ENCODE measurements at regions of chr18 and their contacts with region 1.

Region 1: DNA sequence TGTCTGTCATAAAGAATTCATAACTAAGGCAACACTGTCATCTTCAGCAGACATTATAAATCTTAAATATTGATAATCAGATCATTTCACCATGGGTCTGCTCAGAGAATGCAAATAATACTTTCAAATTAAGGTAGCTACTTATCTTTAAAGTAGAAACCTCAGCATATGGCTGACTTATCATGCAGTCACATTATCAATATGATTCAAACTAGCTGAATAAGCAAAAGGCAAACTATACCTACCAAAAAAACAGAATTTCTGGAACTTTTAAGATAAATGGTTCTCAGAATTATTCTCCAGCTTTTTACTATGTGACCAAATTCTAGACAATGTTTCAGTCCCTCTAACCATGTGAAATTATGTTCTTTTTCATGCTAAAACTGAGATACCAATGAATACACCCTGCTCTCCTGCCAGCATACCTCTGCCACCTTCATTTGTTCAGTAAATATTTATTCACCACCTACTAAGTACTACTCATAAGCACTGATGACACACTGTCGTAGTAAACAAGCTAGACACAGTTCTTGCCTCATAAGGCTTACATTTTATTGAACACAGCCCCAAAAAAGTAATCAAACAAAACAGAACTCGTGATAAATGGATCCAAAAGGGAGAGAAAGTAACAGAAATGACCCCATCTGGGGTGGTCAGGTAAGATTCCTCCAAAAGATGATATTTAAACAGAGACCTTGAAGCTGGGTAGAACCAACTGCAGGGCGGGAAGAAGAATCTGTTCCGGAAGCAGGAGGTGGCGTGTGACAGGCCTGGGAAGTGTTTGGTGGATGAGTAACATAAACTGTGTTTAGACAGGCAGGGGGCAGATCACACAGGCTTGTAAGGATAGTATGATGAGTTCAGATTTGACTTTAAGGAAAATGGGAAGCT is 17.7 kb downstream of the SPIRE1 start:
- DNase-seq: peak; percentile 82
- H3K4me3 ChIP-seq: no peak overlapping the region
- H3K27ac ChIP-seq: peak overlapping the region; percentile 75
- H3K4me1 ChIP-seq: peaks cover 22% of the 10 kb centered on the region
- H3K27me3 ChIP-seq: no peaks in the 10 kb centered on the region
- CTCF ChIP-seq: no peak
- POLR2A ChIP-seq: no peak

Region 2: DNA sequence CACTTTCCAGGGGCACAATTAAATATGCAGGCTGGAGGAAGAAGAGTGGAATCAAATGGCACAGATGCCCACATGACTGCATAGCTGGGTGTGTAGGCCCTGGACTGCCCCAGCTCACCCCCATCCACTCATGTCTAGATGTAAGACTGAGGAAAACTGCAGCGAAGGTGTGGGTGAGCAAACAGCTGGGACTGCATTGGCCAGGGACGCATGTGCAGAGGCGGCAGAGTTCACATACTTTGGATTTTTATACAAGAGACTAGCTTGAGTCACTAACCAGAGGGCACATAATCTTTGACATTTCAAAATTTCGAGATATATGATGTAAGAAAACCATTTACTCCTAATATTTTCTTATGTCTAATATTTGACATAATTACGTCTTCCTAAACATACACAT is 42.5 kb before region 1 on chr18:
- CTCF ChIA-PET with region 1: interaction called, 4 read pairs
- POLR2A ChIA-PET with region 1: no interaction called
- dilution Hi-C with region 1: no loop called
- intact Hi-C with region 1: loop called (anchors 5 kb)
- DNase-seq: peak; percentile 79
- H3K4me3 ChIP-seq: no peak overlapping the region
- H3K27ac ChIP-seq: peak overlapping the region; percentile 87
- H3K4me1 ChIP-seq: peaks cover 58% of the 10 kb centered on the region
- H3K27me3 ChIP-seq: no peaks in the 10 kb centered on the region
- CTCF ChIP-seq: no peak
- POLR2A ChIP-seq: peak; percentile 24

Region 3: GRCh38 chr18:12628706-12629702 is 11.2 kb before region 1 on chr18:
- CTCF ChIA-PET with region 1: interaction called, 20 read pairs
- POLR2A ChIA-PET with region 1: no interaction called
- dilution Hi-C with region 1: no loop called
- intact Hi-C with region 1: no loop called
- DNase-seq: peak; percentile 55
- H3K4me3 ChIP-seq: no peak overlapping the region
- H3K27ac ChIP-seq: peak overlapping the region; percentile 50
- H3K4me1 ChIP-seq: peaks cover 23% of the 10 kb centered on the region
- H3K27me3 ChIP-seq: no peaks in the 10 kb centered on the region
- CTCF ChIP-seq: no peak
- POLR2A ChIP-seq: no peak